ENCODE measurements at regions of chr1 and their contacts with region 1.

Region 1: GRCh38 chr1:42993631-42994121 is 35.0 kb upstream of the SLC2A1 start:
- DNase-seq: peak; percentile 34 to 61
- ATAC-seq: peak; percentile 89 to 98 (median 96)
- H3K4me3 ChIP-seq: no peak overlapping the region
- H3K27ac ChIP-seq: no peak overlapping the region
- H3K4me1 ChIP-seq: peaks cover 7% of the 10 kb centered on the region
- H3K27me3 ChIP-seq: no peaks in the 10 kb centered on the region
- CTCF ChIP-seq: no peak

Region 2: GRCh38 chr1:42913426-42914091 is 80.1 kb before region 1 on chr1:
- intact Hi-C with region 1: no loop called
- DNase-seq: no peak
- ATAC-seq: peak in 3 of 4 donors; percentile 54 to 74 (median 69)
- H3K4me3 ChIP-seq: no peak overlapping the region
- H3K27ac ChIP-seq: no peak overlapping the region
- H3K4me1 ChIP-seq: no peaks in the 10 kb centered on the region
- H3K27me3 ChIP-seq: no peaks in the 10 kb centered on the region
- CTCF ChIP-seq: peak; percentile 70

Region 3: GRCh38 chr1:42936309-42937078 is 57.2 kb before region 1 on chr1:
- intact Hi-C with region 1: loop called in 1 of 2 experiments (anchors 1 kb)
- DNase-seq: peak; percentile 53 to 66
- ATAC-seq: peak in 3 of 4 donors; percentile 26 to 55 (median 43)
- H3K4me3 ChIP-seq: no peak overlapping the region
- H3K27ac ChIP-seq: no peak overlapping the region
- H3K4me1 ChIP-seq: peaks cover 21% of the 10 kb centered on the region
- H3K27me3 ChIP-seq: no peaks in the 10 kb centered on the region
- CTCF ChIP-seq: no peak

Region 4: GRCh38 chr1:42947965-42948732 is 45.5 kb before region 1 on chr1:
- intact Hi-C with region 1: no loop called
- DNase-seq: no peak
- ATAC-seq: no peak
- H3K4me3 ChIP-seq: no peak overlapping the region
- H3K27ac ChIP-seq: no peak overlapping the region
- H3K4me1 ChIP-seq: peaks cover 15% of the 10 kb centered on the region
- H3K27me3 ChIP-seq: peaks cover 0 to 2% (median 0%) of the 10 kb centered on the region in 3 donors
- CTCF ChIP-seq: no peak

Measured in psoas muscle (tissue), 8 donors.